ENCODE measurements at regions of chr3 and their contacts with region 1.

Region 1: DNA sequence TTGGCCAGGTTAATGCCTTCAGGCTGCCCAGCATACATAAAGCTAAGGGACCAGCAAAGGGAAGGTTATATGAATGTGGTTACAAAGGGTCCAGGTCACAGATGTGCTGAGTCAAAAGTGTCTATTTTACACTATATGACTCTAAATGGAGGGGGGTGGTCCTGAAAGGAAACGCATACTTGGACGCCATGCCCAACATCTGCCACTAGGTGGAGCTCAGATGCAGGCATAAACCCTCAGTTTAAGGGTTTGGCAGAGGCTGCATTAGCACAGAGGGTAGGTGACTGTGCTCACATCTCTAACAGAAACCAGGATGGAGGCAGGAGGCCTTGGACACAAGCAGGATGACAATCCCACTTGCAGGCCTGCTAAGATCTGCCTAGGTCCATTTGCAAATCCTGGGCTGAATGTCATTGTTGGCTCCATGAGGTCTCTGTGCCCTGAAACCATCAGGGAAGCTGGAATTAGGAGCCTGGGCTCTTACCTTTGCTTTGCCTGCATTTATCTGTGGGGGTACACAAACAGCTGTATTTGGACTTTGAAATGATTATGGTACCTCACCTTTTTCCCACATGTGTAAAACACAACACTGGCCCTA is 55.8 kb downstream of the ZNF621 start:
- DNase-seq: peak; percentile 72
- H3K4me3 ChIP-seq: no peak overlapping the region
- H3K27ac ChIP-seq: no peak overlapping the region
- H3K4me1 ChIP-seq: no peaks in the 10 kb centered on the region
- H3K27me3 ChIP-seq: peaks cover 0 to 4% of the 10 kb centered on the region in 2 experiments
- CTCF ChIP-seq: peak; percentile 84 to 96
- POLR2A ChIP-seq: no peak

Region 2: DNA sequence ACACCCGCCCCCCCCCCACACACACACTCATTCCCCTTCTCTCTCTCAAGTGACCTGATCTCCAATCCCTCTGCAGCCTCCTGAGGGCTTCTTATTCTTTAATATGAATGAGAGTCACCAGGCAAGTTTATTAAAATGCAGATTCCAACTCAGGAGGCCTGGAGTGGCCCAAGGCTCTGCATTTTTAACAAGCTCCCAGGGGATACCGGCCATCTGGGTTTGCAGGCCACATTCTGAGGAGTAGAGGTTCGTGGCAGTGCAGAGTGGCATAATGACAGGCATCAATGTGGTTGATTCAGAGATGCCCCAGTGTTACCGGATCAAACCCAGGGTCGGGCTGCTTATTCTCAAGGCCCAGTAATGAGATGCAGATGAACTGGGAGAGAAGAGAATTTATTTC is 252.2 kb before region 1 on chr3:
- CTCF ChIA-PET with region 1: interaction called, 16 read pairs
- POLR2A ChIA-PET with region 1: no interaction called
- dilution Hi-C with region 1: no loop called
- intact Hi-C with region 1: loop called (anchors 1 kb)
- DNase-seq: no peak
- H3K4me3 ChIP-seq: no peak overlapping the region
- H3K27ac ChIP-seq: no peak overlapping the region
- H3K4me1 ChIP-seq: no peaks in the 10 kb centered on the region
- H3K27me3 ChIP-seq: peaks cover 0 to 6% of the 10 kb centered on the region in 2 experiments
- CTCF ChIP-seq: no peak
- POLR2A ChIP-seq: no peak

Region 3: DNA sequence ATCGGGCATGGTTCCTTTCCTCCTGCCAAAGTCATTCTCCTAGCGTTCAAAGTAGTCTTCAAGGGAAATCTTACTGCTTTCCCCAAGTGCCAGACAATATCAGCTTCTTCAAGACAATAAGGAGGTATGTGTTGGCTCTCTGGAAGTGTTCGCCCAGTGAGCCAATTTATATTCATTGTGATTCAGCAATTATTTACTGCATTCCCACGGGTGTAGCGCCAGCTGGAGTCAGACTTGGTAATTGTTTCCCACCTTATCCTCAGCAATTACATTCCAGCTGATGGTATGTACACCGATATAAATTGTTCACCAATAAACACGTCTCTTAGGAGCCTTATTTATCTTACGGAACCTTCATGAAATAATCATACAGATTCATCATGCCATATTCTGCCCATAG is 515.1 kb after region 1 on chr3:
- CTCF ChIA-PET with region 1: interaction called, 9 read pairs
- POLR2A ChIA-PET with region 1: no interaction called
- dilution Hi-C with region 1: no loop called
- intact Hi-C with region 1: loop called (anchors 5 kb)
- DNase-seq: peak; percentile 40
- H3K4me3 ChIP-seq: no peak overlapping the region
- H3K27ac ChIP-seq: no peak overlapping the region
- H3K4me1 ChIP-seq: no peaks in the 10 kb centered on the region
- H3K27me3 ChIP-seq: peaks cover 0 to 4% of the 10 kb centered on the region in 2 experiments
- CTCF ChIP-seq: peak in 1 of 2 donors; percentile 12
- POLR2A ChIP-seq: no peak

Region 4: DNA sequence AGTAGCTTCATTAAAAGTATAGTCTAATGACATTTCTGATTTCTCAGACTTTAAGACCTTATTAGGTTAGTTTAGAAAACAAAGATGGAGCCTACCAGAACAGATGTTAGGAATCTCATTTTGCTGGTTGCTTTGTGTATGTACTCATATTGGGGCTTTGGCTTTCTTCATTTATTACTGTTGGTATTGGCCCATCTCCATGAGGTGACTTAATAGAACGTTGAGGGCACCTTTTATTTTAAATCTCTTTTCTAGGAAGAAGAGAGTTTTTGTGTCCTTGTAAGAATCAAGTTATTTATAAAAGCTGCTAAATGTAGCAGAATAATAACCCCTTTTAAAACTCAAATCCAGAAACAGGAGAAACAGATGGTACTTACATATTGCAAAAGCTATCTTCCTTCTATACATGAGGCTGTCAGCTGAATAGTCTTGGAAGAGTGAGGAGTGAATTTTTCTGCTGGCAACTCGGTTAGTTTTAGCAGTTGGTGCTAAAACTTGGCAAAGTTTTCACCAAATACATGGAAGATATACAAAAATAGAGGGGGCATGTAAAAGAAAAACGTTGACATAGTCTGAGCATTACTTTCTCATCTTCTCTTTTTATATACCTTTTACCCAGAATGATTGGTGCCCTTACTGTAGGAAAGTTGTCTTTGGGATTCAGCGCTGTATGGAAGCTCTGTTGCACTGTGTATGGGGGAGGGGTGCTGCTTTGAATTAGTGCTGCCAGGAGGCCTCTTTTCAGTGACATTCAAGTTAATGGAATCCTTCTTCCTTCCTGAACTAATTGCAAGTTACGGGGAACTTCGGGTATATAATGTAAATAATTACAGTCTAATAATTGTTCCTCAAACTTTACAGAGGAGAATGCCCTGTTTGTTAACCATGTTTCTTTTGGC is 654.5 kb after region 1 on chr3:
- CTCF ChIA-PET with region 1: no interaction called
- POLR2A ChIA-PET with region 1: no interaction called
- dilution Hi-C with region 1: no loop called
- intact Hi-C with region 1: loop called (anchors 5 kb)
- DNase-seq: no peak
- H3K4me3 ChIP-seq: no peak overlapping the region
- H3K27ac ChIP-seq: no peak overlapping the region
- H3K4me1 ChIP-seq: no peaks in the 10 kb centered on the region
- H3K27me3 ChIP-seq: no peaks in the 10 kb centered on the region
- CTCF ChIP-seq: no peak
- POLR2A ChIP-seq: no peak

Region 5: DNA sequence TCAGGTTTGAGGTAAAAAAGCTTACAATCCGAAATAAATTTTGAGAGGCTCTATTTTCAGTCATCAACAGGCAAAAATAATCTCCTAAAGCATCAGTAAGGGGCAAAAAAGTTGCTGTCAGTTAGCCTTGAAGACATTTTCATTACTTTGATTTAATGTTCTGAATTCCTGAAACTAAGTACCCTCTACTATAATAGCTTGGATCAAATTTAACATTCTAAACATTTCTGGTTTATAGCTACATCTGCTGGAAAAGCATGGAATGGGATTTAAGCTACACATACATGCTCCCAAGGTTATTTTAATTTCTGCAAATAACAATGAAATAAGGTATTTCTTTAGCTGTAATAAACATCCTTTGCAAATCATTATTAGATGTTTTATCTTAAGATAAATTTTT is 1135.9 kb after region 1 on chr3:
- CTCF ChIA-PET with region 1: interaction called, 17 read pairs
- POLR2A ChIA-PET with region 1: no interaction called
- dilution Hi-C with region 1: no loop called
- intact Hi-C with region 1: loop called (anchors 2 kb)
- DNase-seq: peak; percentile 55
- H3K4me3 ChIP-seq: no peak overlapping the region
- H3K27ac ChIP-seq: no peak overlapping the region
- H3K4me1 ChIP-seq: peaks cover under 1% of the 10 kb centered on the region
- H3K27me3 ChIP-seq: no peaks in the 10 kb centered on the region
- CTCF ChIP-seq: peak in 1 of 2 donors; percentile 16
- POLR2A ChIP-seq: no peak

Measured in endothelial cell of umbilical vein (primary cell).